ENCODE measurements at regions of chr1 and their contacts with region 1.

Region 1: GRCh38 chr1:167148421-167148820 is 54.5 kb downstream of the STYXL2 start:
- DNase-seq: no peak
- ATAC-seq: no peak

Region 2: DNA sequence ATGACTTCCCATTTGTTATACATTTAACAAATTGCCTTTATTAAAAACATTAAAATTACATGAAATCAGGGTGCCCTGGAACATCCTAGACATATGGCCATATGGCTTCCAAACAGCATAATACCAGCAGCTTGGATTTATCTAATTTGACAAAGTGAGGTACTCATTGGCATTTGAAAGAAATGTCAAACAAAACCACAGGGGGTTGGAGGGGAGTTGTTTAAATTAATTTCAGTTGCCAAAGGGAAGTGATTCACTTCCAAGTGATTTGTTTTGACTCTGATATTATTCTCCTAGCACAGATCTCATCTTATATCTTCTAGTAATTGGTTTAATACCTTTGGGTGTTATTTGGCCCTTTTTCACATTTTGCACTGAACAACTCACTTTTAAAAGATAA is 47.7 kb after region 1 on chr1:
- intact Hi-C with region 1: loop called (anchors 10 kb)
- DNase-seq: no peak
- ATAC-seq: no peak

Measured in Right ventricle myocardium inferior (tissue), 1 donor.